ENCODE measurements at regions of chr17 and their contacts with region 1.

Region 1: DNA sequence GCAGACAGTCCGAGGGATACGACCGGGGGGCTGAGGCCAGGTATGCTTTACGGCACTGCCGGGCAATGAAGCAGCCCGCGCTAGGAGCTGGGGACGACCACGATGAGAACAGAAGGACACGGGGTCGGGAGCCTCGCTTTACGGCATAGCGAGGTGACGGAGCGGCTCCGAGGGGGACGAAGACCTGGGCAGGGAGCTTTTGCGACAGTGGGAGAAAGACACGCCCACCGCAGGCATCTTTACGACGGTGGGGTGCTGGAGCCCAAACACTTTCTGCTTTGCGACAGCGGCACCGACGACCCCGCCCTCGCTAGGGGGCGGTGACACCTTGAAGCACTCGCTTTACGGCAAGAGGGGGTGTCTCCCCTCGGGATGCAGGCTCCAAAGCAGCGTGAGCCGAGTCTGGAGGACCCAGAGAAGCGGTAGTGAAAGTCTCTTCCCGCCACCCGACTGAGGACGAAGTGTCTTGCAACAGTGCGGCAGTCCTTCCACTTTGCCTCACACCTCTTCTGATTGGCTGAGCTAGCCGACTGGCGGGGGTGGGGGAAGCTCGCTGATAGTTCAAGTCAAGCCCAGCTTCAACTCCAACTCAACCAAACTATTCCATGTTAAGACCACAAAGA is 350 bp upstream of the NEURL4 start:
- DNase-seq: peak; percentile 98
- H3K4me3 Mint-ChIP-seq: peak overlapping the region; percentile 99
- H3K27ac Mint-ChIP-seq: peak overlapping the region; percentile 96
- H3K4me1 Mint-ChIP-seq: peaks cover 15% of the 10 kb centered on the region
- H3K27me3 Mint-ChIP-seq: no peaks in the 10 kb centered on the region
- CTCF ChIP-seq: no peak

Region 2: GRCh38 chr17:7306911-7307686 is 22.4 kb before region 1 on chr17 and contains the start of gene EIF5A:
- CTCF ChIA-PET with region 1: interaction called, 5 read pairs
- POLR2A ChIA-PET with region 1: interaction called, 18 read pairs
- intact Hi-C with region 1: no loop called
- DNase-seq: peak; percentile 100
- H3K4me3 Mint-ChIP-seq: peak within 1 kb of the TSS; percentile 88
- H3K27ac Mint-ChIP-seq: peak within 1 kb of the TSS; percentile 90
- H3K4me1 Mint-ChIP-seq: peaks cover 24% of the 10 kb centered on the region
- H3K27me3 Mint-ChIP-seq: no peaks in the 10 kb centered on the region
- CTCF ChIP-seq: no peak
- total RNA-seq, gene EIF5A: 1,142 and 1,190 TPM in 2 replicates

Region 3: DNA sequence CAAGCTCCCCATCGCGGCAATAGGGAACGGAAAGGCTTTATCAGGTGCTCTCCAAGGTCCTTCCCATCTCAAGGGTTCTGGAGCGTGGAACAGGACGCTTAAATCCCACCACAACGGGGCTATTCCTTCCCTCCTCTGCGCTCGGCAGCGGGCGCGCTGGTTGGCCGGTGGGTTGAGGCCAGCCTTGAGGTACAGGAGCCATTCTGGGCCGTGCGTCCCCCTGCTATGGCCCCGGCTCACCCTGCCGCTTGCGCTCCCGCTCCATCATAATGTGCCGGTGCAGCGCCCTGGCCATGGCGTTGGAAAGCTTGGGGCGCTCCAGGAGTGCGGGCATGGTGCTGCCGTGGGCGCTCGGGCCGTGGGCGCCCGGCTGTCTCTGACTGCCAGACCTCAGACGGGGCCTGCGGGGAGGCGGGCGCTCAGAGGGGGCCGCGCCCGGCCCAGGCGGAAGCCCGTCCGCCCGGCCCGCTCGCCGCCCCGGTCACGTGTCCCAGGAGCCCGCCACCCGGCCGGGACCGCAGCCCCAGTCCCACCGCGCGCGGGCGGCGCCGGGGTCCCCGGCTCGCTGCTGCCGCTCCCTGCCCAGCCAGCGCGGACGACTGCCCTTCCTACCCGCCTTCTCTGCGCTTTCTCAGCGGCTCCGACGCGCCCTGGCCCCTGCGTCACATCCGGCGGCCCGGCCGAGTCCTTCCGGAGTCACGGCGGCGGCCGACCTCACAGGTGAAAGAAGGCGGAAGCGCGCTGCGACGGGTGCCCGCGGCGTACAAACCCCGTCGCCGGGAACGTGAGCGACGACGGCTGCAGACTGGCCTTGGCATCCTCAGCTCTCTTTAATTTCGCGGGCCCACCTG is 14.5 kb before region 1 on chr17 and contains the start of gene GPS2:
- CTCF ChIA-PET with region 1: interaction called, 5 read pairs
- POLR2A ChIA-PET with region 1: interaction called, 41 read pairs
- intact Hi-C with region 1: no loop called
- DNase-seq: peak; percentile 86
- H3K4me3 Mint-ChIP-seq: peak within 1 kb of the TSS; percentile 85
- H3K27ac Mint-ChIP-seq: peak within 1 kb of the TSS; percentile 84
- H3K4me1 Mint-ChIP-seq: peaks cover 36% of the 10 kb centered on the region
- H3K27me3 Mint-ChIP-seq: no peaks in the 10 kb centered on the region
- CTCF ChIP-seq: no peak
- total RNA-seq, gene GPS2: 29.4 and 49.8 TPM in 2 replicates

Region 4: DNA sequence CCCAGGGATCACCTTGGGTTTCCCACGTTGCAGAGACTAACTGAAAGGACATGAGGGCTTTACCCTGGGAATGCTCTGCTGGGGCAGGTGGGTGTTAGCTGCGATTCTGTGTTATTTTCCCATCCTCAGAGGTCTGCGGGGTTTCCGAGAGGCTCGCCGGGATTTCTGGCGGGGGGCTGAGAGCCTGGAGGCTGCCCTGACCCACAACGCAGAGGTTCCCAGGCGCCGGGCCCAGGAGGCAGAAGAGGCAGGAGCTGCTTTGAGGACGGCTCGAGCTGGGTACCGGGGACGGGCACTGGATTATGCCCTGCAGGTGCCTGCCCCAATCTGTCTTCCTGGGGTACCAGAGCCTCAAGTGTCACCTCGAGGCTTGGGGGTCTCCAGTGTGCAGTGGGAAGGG is 13.8 kb after region 1 on chr17:
- CTCF ChIA-PET with region 1: interaction called, 4 read pairs
- POLR2A ChIA-PET with region 1: interaction called, 54 read pairs
- intact Hi-C with region 1: no loop called
- DNase-seq: no peak
- H3K4me3 Mint-ChIP-seq: no peak overlapping the region
- H3K27ac Mint-ChIP-seq: no peak overlapping the region
- H3K4me1 Mint-ChIP-seq: no peaks in the 10 kb centered on the region
- H3K27me3 Mint-ChIP-seq: peaks cover 12% of the 10 kb centered on the region
- CTCF ChIP-seq: no peak

Region 5: DNA sequence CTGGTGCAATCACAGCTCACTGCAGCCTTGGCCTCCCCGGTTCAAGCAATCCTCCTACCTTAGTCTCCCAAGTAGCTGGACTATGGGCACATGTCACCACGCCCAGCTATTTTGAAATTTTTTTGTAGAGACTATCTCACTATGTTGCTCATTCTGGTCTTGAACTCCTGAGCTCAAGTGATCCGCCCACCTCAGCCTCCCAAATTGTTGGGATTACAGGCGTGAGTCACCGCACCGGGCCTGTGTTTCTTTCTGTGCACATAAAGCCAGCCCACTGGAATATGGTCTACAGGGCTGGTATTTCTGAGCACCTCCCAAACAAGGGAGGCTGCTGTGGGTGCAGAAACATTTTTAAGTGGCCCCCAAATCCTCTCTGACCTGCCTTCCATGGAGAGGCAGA is 33.8 kb after region 1 on chr17:
- CTCF ChIA-PET with region 1: no interaction called
- POLR2A ChIA-PET with region 1: no interaction called
- intact Hi-C with region 1: no loop called
- DNase-seq: peak; percentile 53
- H3K4me3 Mint-ChIP-seq: no peak overlapping the region
- H3K27ac Mint-ChIP-seq: no peak overlapping the region
- H3K4me1 Mint-ChIP-seq: peaks cover 7% of the 10 kb centered on the region
- H3K27me3 Mint-ChIP-seq: no peaks in the 10 kb centered on the region
- CTCF ChIP-seq: no peak

Region 6: DNA sequence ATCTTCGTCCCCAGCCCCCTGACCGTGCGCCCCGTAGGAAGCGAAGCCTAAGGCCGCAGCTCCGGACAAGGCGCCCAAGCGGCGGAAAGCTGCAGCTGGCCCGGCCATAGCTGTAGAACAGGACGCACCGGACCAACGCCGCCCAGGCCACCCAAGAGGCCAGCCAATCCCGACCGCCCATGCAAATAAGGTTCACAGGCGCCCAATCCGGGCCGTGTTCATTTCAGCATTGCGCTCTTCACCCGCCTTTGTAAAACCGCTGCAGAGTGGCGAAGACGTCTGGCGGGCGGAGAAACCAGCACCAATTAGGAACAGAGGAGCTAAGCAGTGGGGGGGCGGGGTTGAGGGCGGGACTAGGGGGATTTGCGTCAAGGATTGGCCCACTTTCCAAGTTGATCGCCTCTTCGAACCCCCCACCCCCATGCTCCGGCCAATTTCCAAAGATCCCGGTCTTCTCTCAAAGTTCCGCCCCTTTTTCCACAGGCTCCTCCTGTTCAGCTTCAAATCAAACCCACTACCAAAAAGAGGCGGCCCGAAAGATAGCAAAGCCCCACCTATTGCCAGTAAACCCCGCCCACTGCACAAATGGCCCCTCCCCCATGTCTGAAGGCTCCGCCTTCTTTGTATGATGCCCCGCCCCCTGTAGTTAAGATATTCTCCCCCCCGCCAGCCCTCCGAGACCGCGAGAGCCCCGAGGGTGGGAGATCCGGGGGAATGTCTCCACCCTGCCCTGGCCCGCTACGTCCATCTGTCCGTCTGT is 74.7 kb after region 1 on chr17 and contains the start of gene TMEM256:
- CTCF ChIA-PET with region 1: no interaction called
- POLR2A ChIA-PET with region 1: interaction called, 12 read pairs
- intact Hi-C with region 1: no loop called
- DNase-seq: peak; percentile 99
- H3K4me3 Mint-ChIP-seq: peak within 1 kb of the TSS; percentile 78
- H3K27ac Mint-ChIP-seq: peak within 1 kb of the TSS; percentile 86
- H3K4me1 Mint-ChIP-seq: peaks cover 16% of the 10 kb centered on the region
- H3K27me3 Mint-ChIP-seq: no peaks in the 10 kb centered on the region
- CTCF ChIP-seq: no peak
- total RNA-seq, gene TMEM256: 35.2 and 42.9 TPM in 2 replicates

Measured in MCF 10A (cell line).